IMR-90 (cell line): ENCODE measurements at regions of chr18 and their contacts with region 1.

Region 1: DNA sequence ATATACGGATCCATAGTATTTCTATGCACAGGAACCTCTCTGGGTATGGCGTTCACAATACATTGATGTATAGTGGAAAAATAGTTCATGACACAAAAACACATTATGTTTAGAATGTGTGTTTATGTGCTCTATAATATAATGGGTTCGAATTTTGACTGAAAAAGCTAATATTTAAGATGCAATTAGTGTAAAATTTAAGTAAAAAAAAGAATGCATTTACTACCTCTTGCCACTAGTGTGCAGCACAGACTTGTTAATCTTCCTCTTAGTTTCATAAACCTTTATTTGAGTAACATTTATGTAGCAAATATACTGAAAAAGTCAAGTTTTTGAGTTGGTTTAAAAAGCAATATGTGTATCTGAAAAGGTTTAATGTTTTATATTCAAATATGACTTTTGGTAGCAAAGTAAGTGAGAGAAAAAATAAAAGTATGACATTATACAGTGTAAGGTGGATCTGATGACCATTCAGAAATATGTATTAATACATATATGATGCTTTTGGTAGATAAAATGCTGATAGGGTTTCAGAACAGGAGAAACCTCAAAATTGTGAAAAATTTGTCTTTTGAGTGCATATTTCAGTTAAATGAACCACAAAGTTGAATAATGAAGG is 49.4 kb downstream of the CCDC102B start:
- DNase-seq: peak; percentile 63
- ATAC-seq: peak; percentile 84
- H3K4me3 ChIP-seq: no peak overlapping the region
- H3K27ac ChIP-seq: no peak overlapping the region
- H3K4me1 ChIP-seq: no peaks in the 10 kb centered on the region
- H3K27me3 ChIP-seq: no peaks in the 10 kb centered on the region
- CTCF ChIP-seq: peak; percentile 74
- POLR2A ChIP-seq: no peak
- RAD21 ChIP-seq: peak; percentile 64

Region 2: GRCh38 chr18:69097349-69097748 is 250.0 kb after region 1 on chr18:
- CTCF ChIA-PET with region 1: no interaction called
- POLR2A ChIA-PET with region 1: no interaction called
- dilution Hi-C with region 1: no loop called
- in situ Hi-C with region 1: no loop called
- intact Hi-C with region 1: no loop called
- DNase-seq: no peak
- ATAC-seq: no peak
- H3K4me3 ChIP-seq: no peak overlapping the region
- H3K27ac ChIP-seq: no peak overlapping the region
- H3K4me1 ChIP-seq: no peaks in the 10 kb centered on the region
- H3K27me3 ChIP-seq: no peaks in the 10 kb centered on the region
- CTCF ChIP-seq: no peak
- POLR2A ChIP-seq: no peak
- RAD21 ChIP-seq: no peak

Region 3: GRCh38 chr18:69400253-69400975 is 553.1 kb after region 1 on chr18 and contains the start of gene DOK6:
- CTCF ChIA-PET with region 1: no interaction called
- POLR2A ChIA-PET with region 1: no interaction called
- dilution Hi-C with region 1: no loop called
- in situ Hi-C with region 1: no loop called
- intact Hi-C with region 1: loop called (anchors 5 kb)
- DNase-seq: peak; percentile 69
- ATAC-seq: peak; percentile 84
- H3K4me3 ChIP-seq: peak within 1 kb of the TSS; percentile 42
- H3K27ac ChIP-seq: peak within 1 kb of the TSS; percentile 51; the same call in 1 of the 2 replicates
- H3K4me1 ChIP-seq: no peaks in the 10 kb centered on the region
- H3K27me3 ChIP-seq: peaks cover 10% of the 10 kb centered on the region
- CTCF ChIP-seq: no peak
- POLR2A ChIP-seq: no peak
- RAD21 ChIP-seq: no peak
- total RNA-seq, gene DOK6: 2.7 and 3.9 TPM in 2 replicates

Region 4: DNA sequence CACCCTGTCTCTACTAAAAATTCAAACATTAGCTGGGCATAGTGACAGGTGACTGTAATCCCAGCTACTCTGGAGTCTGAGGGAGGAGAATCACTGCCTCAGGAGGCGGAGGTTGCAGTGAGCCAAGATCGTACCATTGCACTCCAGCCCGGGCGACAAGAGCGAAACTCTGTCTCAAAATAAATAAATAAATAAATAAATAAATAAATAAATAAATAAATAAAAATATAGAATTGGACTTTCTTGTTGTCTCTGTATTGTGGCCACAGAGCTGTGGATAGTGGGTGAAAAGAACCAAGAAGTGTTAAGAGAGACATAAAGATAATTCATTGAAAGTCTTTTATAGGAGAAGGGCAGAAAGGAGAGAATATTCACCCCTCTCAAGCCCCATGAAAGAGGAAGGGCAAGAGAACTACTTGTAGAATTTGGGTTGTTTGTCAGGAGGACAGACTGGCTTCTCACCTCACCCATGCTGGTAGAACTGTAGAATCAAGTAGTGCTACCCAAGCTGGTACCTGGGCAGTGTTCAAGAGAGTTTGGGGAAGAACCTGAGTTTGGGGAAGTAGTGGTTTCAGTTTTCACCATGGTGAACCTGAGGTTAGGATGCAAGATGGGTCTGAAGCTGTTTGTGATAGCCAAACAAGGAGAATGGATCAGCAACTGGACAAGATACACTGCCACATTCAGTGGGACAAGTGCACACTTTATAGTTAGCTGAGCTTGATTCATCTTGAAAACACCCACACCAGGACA is 843.9 kb after region 1 on chr18:
- CTCF ChIA-PET with region 1: no interaction called
- POLR2A ChIA-PET with region 1: no interaction called
- dilution Hi-C with region 1: no loop called
- in situ Hi-C with region 1: no loop called
- intact Hi-C with region 1: loop called (anchors 10 kb)
- DNase-seq: no peak
- ATAC-seq: no peak
- H3K4me3 ChIP-seq: no peak overlapping the region
- H3K27ac ChIP-seq: no peak overlapping the region
- H3K4me1 ChIP-seq: peaks cover 4% of the 10 kb centered on the region; the same call in 1 of the 2 replicates
- H3K27me3 ChIP-seq: no peaks in the 10 kb centered on the region
- CTCF ChIP-seq: no peak
- POLR2A ChIP-seq: no peak
- RAD21 ChIP-seq: no peak

Region 5: GRCh38 chr18:70072678-70073077 is 1225.3 kb after region 1 on chr18:
- CTCF ChIA-PET with region 1: no interaction called
- POLR2A ChIA-PET with region 1: no interaction called
- dilution Hi-C with region 1: no loop called
- in situ Hi-C with region 1: no loop called
- intact Hi-C with region 1: loop called (anchors 5 kb)
- DNase-seq: peak; percentile 50
- ATAC-seq: peak; percentile 39; the same call in 1 of the 2 replicates
- H3K4me3 ChIP-seq: no peak overlapping the region
- H3K27ac ChIP-seq: no peak overlapping the region
- H3K4me1 ChIP-seq: peaks cover 2% of the 10 kb centered on the region; the same call in 1 of the 2 replicates
- H3K27me3 ChIP-seq: no peaks in the 10 kb centered on the region
- CTCF ChIP-seq: peak; percentile 59
- POLR2A ChIP-seq: no peak
- RAD21 ChIP-seq: peak; percentile 74

Region 6: DNA sequence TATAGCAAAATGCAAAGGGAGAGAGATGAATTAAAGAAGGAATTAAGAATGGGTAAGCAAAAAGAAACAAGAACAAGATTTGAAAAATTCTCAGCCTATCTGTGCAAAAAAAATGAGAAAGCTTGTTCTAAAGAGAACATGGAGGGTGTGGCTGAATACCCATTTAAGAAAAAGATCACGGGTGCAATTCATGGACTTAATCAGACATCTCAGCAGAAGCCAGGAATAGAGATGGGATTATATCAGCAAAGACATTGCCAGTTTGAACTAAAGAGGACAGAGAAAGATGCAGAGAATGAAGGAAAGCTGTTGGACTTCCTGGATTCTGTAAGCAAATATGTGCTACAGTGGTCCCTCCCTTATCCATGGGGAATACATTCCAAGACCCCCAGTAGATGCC is 1242.5 kb after region 1 on chr18:
- CTCF ChIA-PET with region 1: interaction called, 3 read pairs
- POLR2A ChIA-PET with region 1: no interaction called
- dilution Hi-C with region 1: no loop called
- in situ Hi-C with region 1: loop called (anchors 10 kb)
- intact Hi-C with region 1: loop called (anchors 2 kb)
- DNase-seq: no peak
- ATAC-seq: no peak
- H3K4me3 ChIP-seq: no peak overlapping the region
- H3K27ac ChIP-seq: no peak overlapping the region
- H3K4me1 ChIP-seq: peaks cover 1% of the 10 kb centered on the region; the same call in 1 of the 2 replicates
- H3K27me3 ChIP-seq: no peaks in the 10 kb centered on the region
- CTCF ChIP-seq: no peak
- POLR2A ChIP-seq: no peak
- RAD21 ChIP-seq: no peak

Region 7: DNA sequence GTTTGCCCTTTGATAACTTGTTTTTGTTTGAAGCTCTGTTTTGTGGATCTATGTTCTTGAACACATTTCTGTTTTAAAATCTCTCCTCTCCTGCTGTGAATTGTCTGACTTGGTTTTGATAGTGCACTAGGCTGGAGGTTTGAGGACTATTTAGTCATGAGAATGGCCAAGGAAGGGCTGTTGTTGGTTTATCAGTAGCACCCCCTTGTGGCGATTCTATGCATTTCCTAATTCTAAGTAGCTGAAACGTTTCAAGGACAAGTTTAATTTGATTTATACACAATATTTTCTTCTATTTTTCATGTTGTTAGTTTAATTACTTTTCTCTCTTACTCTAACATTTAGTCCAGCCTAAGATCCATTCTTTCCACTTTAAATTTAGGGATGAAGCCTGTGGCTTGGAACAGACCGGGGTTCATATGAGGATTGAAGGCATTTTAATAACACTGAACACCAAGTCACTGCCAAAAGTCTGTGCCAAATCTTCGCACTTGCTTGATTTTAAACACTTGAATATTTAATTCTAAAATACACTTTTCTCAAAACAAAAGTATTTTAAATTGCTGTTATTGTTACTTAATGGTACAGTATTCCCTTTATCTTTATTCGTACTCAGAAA is 1607.5 kb after region 1 on chr18:
- CTCF ChIA-PET with region 1: no interaction called
- POLR2A ChIA-PET with region 1: no interaction called
- dilution Hi-C with region 1: no loop called
- in situ Hi-C with region 1: no loop called
- intact Hi-C with region 1: loop called (anchors 1 kb)
- DNase-seq: peak; percentile 79
- ATAC-seq: peak; percentile 86
- H3K4me3 ChIP-seq: no peak overlapping the region
- H3K27ac ChIP-seq: no peak overlapping the region
- H3K4me1 ChIP-seq: peaks cover 2% of the 10 kb centered on the region; the same call in 1 of the 2 replicates
- H3K27me3 ChIP-seq: no peaks in the 10 kb centered on the region
- CTCF ChIP-seq: peak; percentile 76
- POLR2A ChIP-seq: no peak
- RAD21 ChIP-seq: peak; percentile 77